ENCODE measurements at regions of chr7 and their contacts with region 1.

Region 1: GRCh38 chr7:12524794-12525386 is 45.6 kb upstream of the SCIN start:
- DNase-seq: peak; percentile 33
- H3K4me3 ChIP-seq: no peak overlapping the region
- H3K27ac ChIP-seq: no peak overlapping the region
- H3K4me1 ChIP-seq: no peaks in the 10 kb centered on the region
- CTCF ChIP-seq: peak; percentile 80

Region 2: DNA sequence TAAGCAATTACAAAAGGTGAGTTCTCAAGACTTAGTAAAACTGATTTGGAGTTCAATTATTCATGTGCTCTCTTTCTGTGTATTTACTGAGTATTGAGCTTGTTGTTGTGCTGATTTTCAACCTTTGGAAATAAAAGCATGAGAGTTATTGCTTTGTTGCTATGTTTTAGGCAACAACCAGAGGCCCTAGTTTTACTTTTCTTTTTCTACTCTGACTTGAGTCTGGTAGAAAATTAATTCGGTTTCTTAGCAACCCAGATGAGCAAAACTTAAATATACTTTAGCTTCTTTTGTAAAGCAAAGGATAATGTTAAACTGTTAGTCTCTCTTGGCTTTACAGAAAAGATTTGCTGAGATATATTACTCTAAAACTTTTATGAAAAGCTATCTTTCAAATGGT is 20.7 kb before region 1 on chr7:
- CTCF ChIA-PET with region 1: no interaction called
- POLR2A ChIA-PET with region 1: no interaction called
- intact Hi-C with region 1: no loop called
- DNase-seq: no peak
- H3K4me3 ChIP-seq: no peak overlapping the region
- H3K27ac ChIP-seq: no peak overlapping the region
- H3K4me1 ChIP-seq: no peaks in the 10 kb centered on the region
- CTCF ChIP-seq: no peak

Region 3: DNA sequence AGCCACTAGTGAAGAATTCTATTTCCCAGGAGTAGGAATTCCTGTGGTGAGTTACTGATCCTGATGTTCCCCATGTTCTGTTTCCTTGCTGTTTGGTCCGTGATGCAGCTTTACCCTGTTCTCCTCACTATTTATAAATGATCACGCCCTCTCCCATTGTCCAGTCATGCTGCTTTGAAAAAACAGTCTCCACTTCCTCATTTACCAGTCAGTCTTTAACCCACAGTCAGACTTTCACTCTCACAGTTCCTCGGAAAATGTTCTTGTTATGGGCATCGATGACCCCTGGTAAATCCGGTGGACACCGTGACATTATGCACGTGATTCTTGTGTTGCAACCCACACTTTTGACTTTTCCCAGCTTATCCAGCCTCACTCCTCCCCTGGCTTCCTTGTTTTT is 60.0 kb after region 1 on chr7:
- CTCF ChIA-PET with region 1: no interaction called
- POLR2A ChIA-PET with region 1: no interaction called
- intact Hi-C with region 1: no loop called
- DNase-seq: no peak
- H3K4me3 ChIP-seq: no peak overlapping the region
- H3K27ac ChIP-seq: no peak overlapping the region
- H3K4me1 ChIP-seq: no peaks in the 10 kb centered on the region
- CTCF ChIP-seq: no peak

Region 4: DNA sequence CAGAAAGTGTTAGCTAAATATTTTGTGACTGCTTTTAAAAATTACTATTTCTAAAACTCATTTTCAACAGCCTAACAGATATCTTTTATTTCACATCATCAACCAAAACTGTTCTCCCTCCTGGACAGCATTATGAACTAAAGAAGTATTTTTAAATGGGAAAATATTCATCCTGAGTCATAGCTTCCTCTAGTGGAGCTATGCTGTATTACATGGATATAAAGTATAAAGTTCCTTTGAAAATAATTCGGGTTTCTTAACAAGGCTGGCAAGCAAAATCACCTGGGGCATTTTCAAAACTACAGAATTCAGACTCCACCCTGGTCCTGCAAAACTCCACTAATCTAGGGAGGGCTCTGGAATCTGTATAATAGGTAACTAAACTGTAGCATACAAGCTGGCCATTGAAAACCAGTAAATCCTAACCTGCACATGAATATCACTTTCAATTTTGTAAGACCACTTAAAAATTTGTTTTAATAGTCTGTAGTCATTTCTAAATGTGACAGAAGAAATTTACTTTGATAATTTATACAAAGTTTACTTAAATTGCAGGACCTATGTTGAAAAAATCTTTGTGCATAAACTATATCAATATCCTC is 99.1 kb after region 1 on chr7:
- CTCF ChIA-PET with region 1: no interaction called
- POLR2A ChIA-PET with region 1: no interaction called
- intact Hi-C with region 1: loop called (anchors 2 kb)
- DNase-seq: no peak
- H3K4me3 ChIP-seq: no peak overlapping the region
- H3K27ac ChIP-seq: no peak overlapping the region
- H3K4me1 ChIP-seq: no peaks in the 10 kb centered on the region
- CTCF ChIP-seq: peak; percentile 77